Activated CD4-positive, alpha-beta T cell treated with anti-CD3 and anti-CD28 coated beads for 36 hours (primary cell): ENCODE measurements at regions of chr1 and their contacts with region 1.

Region 1: GRCh38 chr1:117367047-117368018 is at the start of gene MAN1A2:
- DNase-seq: peak; percentile 82
- ATAC-seq: peak; percentile 60
- H3K4me3 Mint-ChIP-seq: peak within 1 kb of the TSS; percentile 85
- H3K27ac Mint-ChIP-seq: peak within 1 kb of the TSS; percentile 98
- H3K4me1 Mint-ChIP-seq: peaks cover 52% of the 10 kb centered on the region
- H3K27me3 Mint-ChIP-seq: no peaks in the 10 kb centered on the region
- total RNA-seq, gene MAN1A2: 18.5 to 20.4 TPM

Region 2: DNA sequence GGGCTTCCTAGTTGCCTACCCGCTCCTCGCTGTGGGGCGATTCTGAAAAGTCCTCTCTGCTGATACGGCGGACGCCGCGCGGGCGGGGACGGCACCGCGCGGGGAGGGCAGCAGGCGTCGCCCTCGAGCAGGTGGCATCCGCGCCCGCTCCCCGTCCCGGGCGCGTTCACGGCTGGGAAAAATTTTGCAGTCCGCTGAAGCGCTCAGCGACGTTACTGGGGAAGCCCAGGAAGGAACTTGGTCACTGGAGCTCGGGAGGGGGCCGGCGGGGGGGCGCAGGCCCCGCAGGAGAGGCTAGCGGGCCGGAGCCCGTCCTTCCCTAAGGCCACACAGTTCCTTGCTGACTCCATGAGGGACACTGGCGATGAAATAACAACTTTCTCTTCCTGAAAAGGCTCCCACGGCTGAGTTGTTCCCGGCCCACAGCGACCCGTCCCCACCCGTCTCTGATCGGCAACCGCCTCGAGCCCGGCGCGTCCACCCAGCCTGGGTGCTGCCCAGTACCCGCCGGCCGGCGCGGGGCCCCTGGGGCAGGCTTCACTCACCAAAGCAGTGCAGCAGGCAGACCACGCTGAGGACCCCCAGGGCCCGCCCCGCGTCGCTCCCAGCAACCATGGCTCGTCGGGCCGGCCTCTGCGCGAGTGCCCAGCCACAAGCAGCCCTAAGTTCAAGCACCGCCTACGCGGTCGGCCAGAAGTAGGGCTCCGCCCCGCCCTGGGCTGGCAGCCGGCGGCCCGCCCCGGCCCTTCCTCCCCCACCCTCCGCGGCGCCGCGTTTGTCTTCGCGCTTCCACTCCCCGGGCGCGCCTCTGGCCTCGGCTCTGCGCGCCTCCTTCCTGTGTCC is 796.8 kb before region 1 on chr1 and contains the start of gene CD58:
- CTCF ChIA-PET with region 1: no interaction called
- POLR2A ChIA-PET with region 1: no interaction called
- intact Hi-C with region 1: loop called in 1 of 2 experiments (anchors 5 kb)
- DNase-seq: peak; percentile 93
- ATAC-seq: peak; percentile 77
- H3K4me3 Mint-ChIP-seq: peak within 1 kb of the TSS; percentile 91
- H3K27ac Mint-ChIP-seq: peak within 1 kb of the TSS; percentile 87
- H3K4me1 Mint-ChIP-seq: peaks cover 64% of the 10 kb centered on the region
- H3K27me3 Mint-ChIP-seq: peaks cover 8% of the 10 kb centered on the region
- total RNA-seq, gene CD58: 12.4 to 16.0 TPM

Region 3: DNA sequence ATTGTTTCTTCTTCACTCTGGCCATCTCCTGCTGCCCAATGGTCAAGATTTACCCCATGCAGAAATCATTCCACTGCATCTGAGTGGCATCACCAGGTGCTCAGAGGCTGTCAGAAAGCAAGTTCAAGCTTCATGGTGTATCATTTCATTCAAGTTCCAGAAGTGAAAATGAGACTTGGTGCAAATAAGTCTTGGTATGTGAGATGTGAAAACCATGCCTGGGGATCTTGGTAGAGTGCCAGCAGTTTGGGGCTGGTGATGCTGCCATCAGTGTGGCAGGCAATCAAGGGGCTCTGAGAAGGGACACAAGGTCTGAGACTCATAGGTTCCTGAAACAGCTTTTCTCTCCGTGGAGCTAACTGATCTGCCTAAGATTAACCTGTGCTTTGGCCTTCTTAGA is 561.1 kb before region 1 on chr1:
- CTCF ChIA-PET with region 1: no interaction called
- POLR2A ChIA-PET with region 1: no interaction called
- intact Hi-C with region 1: loop called in 1 of 2 experiments (anchors 5 kb)
- DNase-seq: peak; percentile 92
- ATAC-seq: peak; percentile 68
- H3K4me3 Mint-ChIP-seq: peak overlapping the region; percentile 85
- H3K27ac Mint-ChIP-seq: peak overlapping the region; percentile 94
- H3K4me1 Mint-ChIP-seq: peaks cover 85% of the 10 kb centered on the region
- H3K27me3 Mint-ChIP-seq: no peaks in the 10 kb centered on the region

Region 4: DNA sequence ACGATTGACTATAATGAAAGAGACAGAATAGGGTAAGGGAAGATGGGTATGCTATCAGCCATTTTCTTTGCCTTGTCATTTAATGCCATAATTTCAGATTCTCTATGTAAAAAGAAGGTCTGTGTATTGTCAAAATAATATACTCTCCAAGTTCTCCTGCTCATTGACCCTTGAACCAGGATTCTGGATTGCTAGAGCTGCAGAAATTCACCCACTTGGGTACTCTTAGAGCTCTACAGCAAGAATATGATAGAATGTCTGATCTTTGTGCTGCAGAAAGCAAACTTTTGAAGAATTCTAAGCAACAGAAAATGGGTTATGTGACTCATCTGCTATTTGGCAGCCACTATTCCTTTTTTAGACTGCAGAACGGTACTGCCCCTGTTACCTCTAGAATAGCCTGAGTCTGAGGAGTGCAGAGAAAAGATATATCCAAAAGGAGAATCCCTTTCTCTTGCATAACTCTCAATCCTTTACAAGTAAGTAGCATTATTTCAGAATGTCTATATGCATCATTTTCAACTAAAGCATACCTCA is 160.3 kb after region 1 on chr1:
- CTCF ChIA-PET with region 1: no interaction called
- POLR2A ChIA-PET with region 1: no interaction called
- intact Hi-C with region 1: loop called in 1 of 2 experiments (anchors 2 kb)
- DNase-seq: no peak
- ATAC-seq: peak; percentile 37
- H3K4me3 Mint-ChIP-seq: no peak overlapping the region
- H3K27ac Mint-ChIP-seq: no peak overlapping the region
- H3K4me1 Mint-ChIP-seq: peaks cover 31% of the 10 kb centered on the region
- H3K27me3 Mint-ChIP-seq: no peaks in the 10 kb centered on the region

Region 5: GRCh38 chr1:117605774-117606648 is 238.7 kb after region 1 on chr1 and contains the start of gene TENT5C:
- CTCF ChIA-PET with region 1: no interaction called
- POLR2A ChIA-PET with region 1: interaction called, 5 read pairs
- intact Hi-C with region 1: loop called (anchors 1 to 10 kb)
- DNase-seq: peak; percentile 98
- ATAC-seq: peak; percentile 96
- H3K4me3 Mint-ChIP-seq: peak within 1 kb of the TSS; percentile 92
- H3K27ac Mint-ChIP-seq: peak within 1 kb of the TSS; percentile 86
- H3K4me1 Mint-ChIP-seq: peaks cover 37% of the 10 kb centered on the region
- H3K27me3 Mint-ChIP-seq: peaks cover 2% of the 10 kb centered on the region
- total RNA-seq, gene TENT5C: 6.0 to 6.4 TPM

Region 6: GRCh38 chr1:117929173-117929989 is 562.0 kb after region 1 on chr1 and contains the starts of genes GDAP2 and WDR3:
- CTCF ChIA-PET with region 1: no interaction called
- POLR2A ChIA-PET with region 1: no interaction called
- intact Hi-C with region 1: loop called (anchors 1 to 10 kb)
- DNase-seq: peak; percentile 98
- ATAC-seq: peak; percentile 97
- H3K4me3 Mint-ChIP-seq: peak within 1 kb of the TSS; percentile 94
- H3K27ac Mint-ChIP-seq: peak within 1 kb of the TSS; percentile 90
- H3K4me1 Mint-ChIP-seq: peaks cover 54% of the 10 kb centered on the region
- H3K27me3 Mint-ChIP-seq: no peaks in the 10 kb centered on the region
- total RNA-seq, gene GDAP2: 18.8 to 20.9 TPM
- total RNA-seq, gene WDR3: 45.0 to 63.7 TPM